Left colon (tissue), 2 donors: ENCODE measurements at regions of chr1 and their contacts with region 1.

Region 1: GRCh38 chr1:183471743-183472487 is 384 bp upstream of the SMG7 start:
- DNase-seq: peak; percentile 98
- ATAC-seq: peak; percentile 64

Region 2: GRCh38 chr1:183622884-183623785 is 151.2 kb after region 1 on chr1:
- intact Hi-C with region 1: loop called in 1 of 2 experiments (anchors 5 kb)
- DNase-seq: peak; percentile 46 to 60
- ATAC-seq: peak; percentile 97